ENCODE measurements at regions of chr3 and their contacts with region 1.

Region 1: GRCh38 chr3:112990672-112991602 is at the start of gene GTPBP8:
- DNase-seq: peak; percentile 90
- ATAC-seq: peak; percentile 95
- H3K4me3 Mint-ChIP-seq: peak within 1 kb of the TSS; percentile 93
- H3K27ac Mint-ChIP-seq: peak within 1 kb of the TSS; percentile 98
- H3K4me1 Mint-ChIP-seq: peaks cover 58% of the 10 kb centered on the region
- H3K27me3 Mint-ChIP-seq: no peaks in the 10 kb centered on the region
- total RNA-seq, gene GTPBP8: 24.3 to 24.5 TPM

Region 2: DNA sequence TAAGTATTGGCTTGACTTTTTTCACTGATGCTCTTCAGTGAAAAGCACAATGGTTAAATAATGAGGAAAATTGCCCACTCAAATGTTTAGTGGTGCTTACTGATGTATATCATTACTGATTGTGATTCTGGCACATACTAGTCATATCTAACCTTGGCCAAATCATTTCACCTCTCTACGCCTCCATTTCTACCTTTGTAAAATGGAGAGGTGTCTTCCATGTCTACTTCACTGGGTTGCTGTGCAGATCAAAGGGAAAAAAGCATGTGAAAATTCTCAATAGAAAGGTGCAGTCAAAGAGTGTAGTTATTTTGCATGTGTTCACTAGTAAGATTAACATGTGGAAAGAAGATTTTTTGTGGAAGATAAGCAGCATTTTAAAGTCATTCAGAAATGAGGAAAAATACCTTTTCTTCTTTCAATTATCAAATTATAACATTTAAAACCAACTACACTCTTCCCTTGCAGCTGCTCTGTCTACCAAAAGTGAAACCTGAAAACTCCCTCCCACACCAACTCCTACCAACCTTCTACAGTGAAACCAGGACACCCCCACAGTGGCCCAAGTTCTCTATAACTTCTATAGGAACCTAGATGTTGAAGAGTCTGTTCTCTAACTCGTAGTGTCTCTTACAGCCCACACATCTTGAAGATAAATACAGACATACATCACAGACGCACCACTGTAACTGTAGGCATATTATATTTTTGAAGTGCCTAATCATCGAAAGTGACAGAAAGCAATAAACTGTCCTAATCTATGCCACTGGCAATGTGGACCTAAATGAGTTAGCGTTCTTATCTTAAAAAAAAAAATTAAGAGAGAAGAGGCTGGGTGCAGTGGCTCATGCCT is 17.4 kb before region 1 on chr3:
- CTCF ChIA-PET with region 1: interaction called, 56 read pairs
- POLR2A ChIA-PET with region 1: interaction called, 8 read pairs
- DNase-seq: peak; percentile 60
- ATAC-seq: peak; percentile 89
- H3K4me3 Mint-ChIP-seq: peak overlapping the region; percentile 79
- H3K27ac Mint-ChIP-seq: peak overlapping the region; percentile 84
- H3K4me1 Mint-ChIP-seq: peaks cover 53% of the 10 kb centered on the region
- H3K27me3 Mint-ChIP-seq: no peaks in the 10 kb centered on the region

Region 3: GRCh38 chr3:112979240-112979832 is 11.6 kb before region 1 on chr3:
- CTCF ChIA-PET with region 1: interaction called, 56 read pairs
- POLR2A ChIA-PET with region 1: interaction called, 8 read pairs
- DNase-seq: peak; percentile 47
- ATAC-seq: no peak
- H3K4me3 Mint-ChIP-seq: no peak overlapping the region
- H3K27ac Mint-ChIP-seq: no peak overlapping the region
- H3K4me1 Mint-ChIP-seq: peaks cover 37% of the 10 kb centered on the region
- H3K27me3 Mint-ChIP-seq: no peaks in the 10 kb centered on the region

Region 4: GRCh38 chr3:113002679-113003078 is 11.7 kb after region 1 on chr3:
- CTCF ChIA-PET with region 1: interaction called, 19 read pairs
- POLR2A ChIA-PET with region 1: interaction called, 21 read pairs
- DNase-seq: peak; percentile 69
- ATAC-seq: peak; percentile 67
- H3K4me3 Mint-ChIP-seq: no peak overlapping the region
- H3K27ac Mint-ChIP-seq: peak overlapping the region; percentile 86
- H3K4me1 Mint-ChIP-seq: peaks cover 61% of the 10 kb centered on the region
- H3K27me3 Mint-ChIP-seq: no peaks in the 10 kb centered on the region

Region 5: DNA sequence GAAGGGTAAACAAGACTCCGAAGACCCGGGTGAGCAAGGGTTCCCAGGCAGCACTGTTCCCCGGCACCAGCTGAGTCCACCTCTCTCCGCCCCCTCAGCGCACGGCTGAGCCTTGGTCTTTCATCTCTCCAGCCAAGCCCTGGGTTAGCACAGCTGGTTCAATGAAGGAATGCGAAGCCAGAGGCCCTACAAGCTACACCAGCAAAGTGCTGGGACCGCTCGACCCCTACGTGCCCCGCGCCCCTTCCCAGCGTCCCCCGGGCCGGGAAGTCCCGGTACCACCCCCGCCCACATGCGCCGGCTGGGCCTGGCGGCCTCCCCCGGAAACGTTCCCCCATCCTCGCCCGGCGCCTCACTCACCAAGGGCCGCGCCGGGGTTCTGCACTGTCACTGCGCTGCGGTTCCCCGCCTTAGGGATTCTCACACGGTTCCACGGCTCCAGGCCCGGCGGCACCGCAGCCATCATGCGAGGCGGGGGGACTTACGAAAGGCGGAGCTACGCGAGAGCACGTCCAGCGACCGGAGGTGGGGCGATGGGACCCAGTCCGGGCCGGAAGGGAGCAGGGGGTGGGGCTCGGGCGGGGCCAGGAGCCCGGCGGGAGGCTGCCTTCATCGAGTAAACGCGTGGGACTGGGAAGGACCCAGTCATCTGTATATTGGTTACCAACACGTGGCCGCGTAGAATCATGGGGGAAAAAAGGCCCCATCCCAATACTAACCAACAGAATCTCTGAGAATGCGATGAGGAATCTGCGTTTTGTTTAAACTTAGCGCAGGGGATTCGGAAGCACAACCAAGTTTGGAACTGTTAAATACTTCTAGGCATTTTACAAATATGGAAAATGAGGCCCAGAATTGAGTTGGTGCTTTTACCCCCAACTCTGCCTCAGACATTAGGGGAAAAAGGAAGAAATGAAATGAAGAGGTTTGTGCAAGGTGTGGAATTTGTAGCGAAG is 28.5 kb after region 1 on chr3:
- CTCF ChIA-PET with region 1: interaction called, 4 read pairs
- POLR2A ChIA-PET with region 1: interaction called, 18 read pairs
- DNase-seq: peak; percentile 89
- ATAC-seq: peak; percentile 96
- H3K4me3 Mint-ChIP-seq: peak overlapping the region; percentile 82
- H3K27ac Mint-ChIP-seq: peak overlapping the region; percentile 91
- H3K4me1 Mint-ChIP-seq: peaks cover 36% of the 10 kb centered on the region
- H3K27me3 Mint-ChIP-seq: no peaks in the 10 kb centered on the region